Stomach (tissue), 19 donors: ENCODE measurements at regions of chr14 and their contacts with region 1.

Region 1: GRCh38 chr14:60980811-60981632 is at the starts of genes SLC38A6 and TRMT5:
- DNase-seq: peak; percentile 94 to 98
- H3K4me3 ChIP-seq: peak within 1 kb of the TSS; percentile 72 to 97 (median 88)
- H3K27ac ChIP-seq: peak within 1 kb of the TSS; percentile 79 to 93 (median 85)
- H3K4me1 ChIP-seq: peaks cover 0 to 51% (median 35%) of the 10 kb centered on the region in 4 donors
- H3K27me3 ChIP-seq: no peaks in the 10 kb centered on the region
- CTCF ChIP-seq: peak in 1 of 7 experiments; percentile 9
- EP300 ChIP-seq: no peak
- POLR2A ChIP-seq: no peak
- total RNA-seq, gene SLC38A6: 2.9 to 45.9 (median 18.8) TPM in 4 of 5 donors, not detected in the other
- total RNA-seq, gene TRMT5: 2.0 to 9.9 (median 4.2) TPM

Region 2: DNA sequence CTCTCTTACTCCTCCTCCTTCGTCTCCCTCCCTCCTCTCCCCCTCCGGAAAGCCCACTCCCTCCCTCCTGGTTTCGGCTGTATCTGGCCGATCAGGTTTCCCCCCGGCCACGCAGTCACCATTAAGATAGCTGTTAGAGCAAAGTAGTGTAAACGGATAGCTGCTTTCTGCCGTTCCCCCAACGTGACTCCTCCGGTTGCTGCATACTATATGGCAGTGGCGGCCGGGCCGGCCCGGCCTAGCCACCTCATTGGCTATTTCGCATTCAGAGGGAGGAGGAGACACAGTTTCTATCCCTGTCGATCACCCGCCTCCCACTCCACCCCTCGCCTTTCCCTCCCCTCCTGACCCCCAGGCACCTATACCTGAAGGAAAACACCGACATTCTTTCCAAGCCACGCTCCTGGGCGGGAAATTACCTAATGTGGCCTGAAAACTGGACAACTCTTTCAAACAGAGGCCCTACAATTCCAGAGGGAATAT is 256.8 kb before region 1 on chr14 and contains the start of gene SIX4:
- intact Hi-C with region 1: loop called (anchors 10 kb)
- DNase-seq: peak; percentile 78 to 88
- H3K4me3 ChIP-seq: peak within 1 kb of the TSS; percentile 68 to 94 (median 80)
- H3K27ac ChIP-seq: peak within 1 kb of the TSS; percentile 64 to 85 (median 83)
- H3K4me1 ChIP-seq: peaks cover 13 to 36% (median 33%) of the 10 kb centered on the region in 4 donors
- H3K27me3 ChIP-seq: peaks cover 0 to 81% (median 31%) of the 10 kb centered on the region in 3 donors
- CTCF ChIP-seq: no peak
- EP300 ChIP-seq: no peak
- POLR2A ChIP-seq: no peak
- total RNA-seq, gene SIX4: 1.8 to 5.8 (median 3.9) TPM in 4 of 5 donors, not detected in the other